ENCODE measurements at regions of chr17 and their contacts with region 1.

Region 1: DNA sequence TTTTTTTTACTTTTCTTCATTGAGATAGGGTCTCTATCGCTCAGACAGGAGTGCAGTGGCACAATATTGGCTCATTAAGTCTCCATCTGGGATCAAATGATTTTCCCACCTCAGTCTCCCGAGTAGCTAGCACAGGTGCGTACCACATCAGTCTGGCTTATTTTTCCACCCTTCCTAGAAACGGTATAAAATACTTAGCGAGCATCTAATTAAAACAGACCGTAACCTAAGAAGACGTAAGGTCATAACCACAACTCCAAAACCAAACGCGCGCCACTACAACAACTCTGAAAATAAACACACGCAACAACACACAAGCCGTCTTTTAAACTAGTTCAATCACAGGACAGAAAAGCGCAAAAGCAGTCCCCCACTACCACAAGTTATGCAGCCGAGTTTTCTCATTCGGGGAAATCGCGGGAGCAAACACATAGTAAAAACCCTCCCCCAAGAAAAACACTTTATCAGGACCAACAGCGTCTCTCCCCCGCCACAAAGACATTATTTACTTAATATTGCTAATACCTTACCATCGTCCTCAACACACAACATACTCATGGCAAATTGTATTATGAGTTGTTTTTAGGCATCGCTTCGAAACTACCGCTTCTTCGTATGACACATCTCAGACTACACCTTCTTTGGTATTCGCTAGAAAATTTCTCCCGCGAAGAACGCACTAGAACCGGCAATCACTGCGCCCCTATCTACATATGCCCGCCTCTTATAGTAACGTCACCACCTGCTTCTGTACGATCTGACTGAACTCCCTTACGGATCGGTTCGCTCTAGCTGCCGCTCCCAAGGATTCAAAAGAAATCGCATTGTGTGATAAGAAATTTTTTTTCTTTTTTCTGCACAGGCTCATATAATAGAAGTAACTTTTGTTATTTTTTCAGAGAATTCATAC is 32.8 kb downstream of the TEX14 start:
- DNase-seq: peak; percentile 97
- H3K4me3 Mint-ChIP-seq: peak overlapping the region; percentile 69
- H3K27ac Mint-ChIP-seq: peak overlapping the region; percentile 99
- H3K4me1 Mint-ChIP-seq: peaks cover 13% of the 10 kb centered on the region
- H3K27me3 Mint-ChIP-seq: no peaks in the 10 kb centered on the region
- CTCF ChIP-seq: no peak

Region 2: GRCh38 chr17:58615768-58616659 is 43.0 kb before region 1 on chr17:
- CTCF ChIA-PET with region 1: no interaction called
- POLR2A ChIA-PET with region 1: no interaction called
- intact Hi-C with region 1: no loop called
- DNase-seq: no peak
- H3K4me3 Mint-ChIP-seq: no peak overlapping the region
- H3K27ac Mint-ChIP-seq: no peak overlapping the region
- H3K4me1 Mint-ChIP-seq: no peaks in the 10 kb centered on the region
- H3K27me3 Mint-ChIP-seq: no peaks in the 10 kb centered on the region
- CTCF ChIP-seq: no peak

Region 3: DNA sequence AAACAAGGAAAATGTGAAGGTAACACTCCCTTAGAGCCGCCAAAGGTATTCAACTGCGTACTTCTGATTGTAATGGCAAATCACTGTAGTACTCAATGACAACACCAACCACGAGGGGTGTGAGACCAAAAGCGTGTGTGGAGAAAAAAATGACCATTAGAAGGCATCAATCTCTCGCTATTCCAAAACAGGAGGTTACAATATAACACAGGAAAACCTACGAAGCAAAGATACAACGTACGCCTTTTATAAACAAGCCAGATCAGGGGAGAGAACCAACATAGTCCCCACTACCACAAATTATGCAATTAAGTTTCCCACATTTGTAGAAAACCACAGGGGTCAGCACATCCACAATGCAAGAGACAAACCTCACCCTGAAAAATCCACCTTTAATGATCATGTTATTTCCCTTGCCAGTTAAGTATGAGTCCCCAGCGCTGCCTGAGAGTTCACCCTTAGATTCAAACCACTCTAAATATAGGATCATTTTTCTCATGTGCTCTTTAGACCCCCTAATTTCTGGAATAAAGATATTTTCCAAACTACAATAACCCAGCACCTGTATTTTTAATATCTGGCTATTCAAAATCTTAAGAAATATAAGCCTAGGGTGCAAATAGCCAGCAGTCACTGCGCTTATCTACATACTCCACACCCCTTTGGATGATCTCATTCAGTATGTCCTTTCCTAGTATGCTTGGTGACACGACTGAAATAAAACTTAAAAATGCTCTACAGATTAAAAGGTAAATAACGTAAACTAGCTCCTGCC is 20.4 kb after region 1 on chr17:
- CTCF ChIA-PET with region 1: interaction called, 3 read pairs
- POLR2A ChIA-PET with region 1: interaction called, 5 read pairs
- intact Hi-C with region 1: loop called (anchors 1 kb)
- DNase-seq: peak; percentile 87
- H3K4me3 Mint-ChIP-seq: peak overlapping the region; percentile 44
- H3K27ac Mint-ChIP-seq: peak overlapping the region; percentile 65
- H3K4me1 Mint-ChIP-seq: peaks cover 12% of the 10 kb centered on the region
- H3K27me3 Mint-ChIP-seq: no peaks in the 10 kb centered on the region
- CTCF ChIP-seq: no peak